ENCODE measurements at regions of chr12 and their contacts with region 1.

Region 1: GRCh38 chr12:21151180-21151579 is 20.2 kb downstream of the SLCO1B1 start:
- DNase-seq: no peak
- ATAC-seq: no peak
- H3K4me3 ChIP-seq: no peak overlapping the region
- H3K27ac ChIP-seq: no peak overlapping the region
- H3K4me1 ChIP-seq: no peaks in the 10 kb centered on the region
- H3K27me3 ChIP-seq: no peaks in the 10 kb centered on the region
- CTCF ChIP-seq: no peak
- POLR2A ChIP-seq: no peak

Region 2: DNA sequence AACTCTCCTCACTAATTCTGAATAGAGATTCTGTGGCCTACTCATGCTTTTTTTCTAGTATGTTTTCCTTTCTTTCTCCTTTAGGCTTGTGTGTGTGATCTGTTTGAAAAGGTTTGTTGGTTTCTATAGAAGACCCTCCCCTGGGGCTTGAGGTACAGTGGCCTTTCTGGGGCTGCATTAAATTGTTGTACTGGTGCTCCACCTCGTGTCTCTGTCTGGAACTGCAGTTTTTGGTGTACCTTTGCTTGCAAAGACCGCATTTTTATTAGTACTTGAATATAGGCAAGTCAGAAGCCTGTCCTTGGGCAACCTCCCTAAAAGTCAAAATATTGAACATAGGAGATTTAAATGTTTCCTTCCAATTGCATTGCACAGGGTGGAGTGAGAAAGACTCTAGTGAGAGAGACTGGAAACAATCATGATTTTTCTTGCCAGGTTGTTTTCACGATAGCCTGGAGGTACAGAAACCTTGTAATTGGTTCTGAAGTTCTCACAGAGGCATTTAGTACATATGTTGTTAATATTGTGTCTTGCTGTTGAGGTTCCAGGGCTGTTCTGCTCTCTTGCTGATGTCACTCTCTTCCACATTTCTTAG is 18.8 kb after region 1 on chr12:
- intact Hi-C with region 1: loop called in 1 of 10 experiments (anchors 1 kb)
- DNase-seq: no peak
- ATAC-seq: no peak
- H3K4me3 ChIP-seq: no peak overlapping the region
- H3K27ac ChIP-seq: no peak overlapping the region
- H3K4me1 ChIP-seq: no peaks in the 10 kb centered on the region
- H3K27me3 ChIP-seq: no peaks in the 10 kb centered on the region
- CTCF ChIP-seq: peak in 10 of 12 donors; percentile 32 to 54 (median 42)
- POLR2A ChIP-seq: no peak